ENCODE measurements at regions of chr18 and their contacts with region 1.

Region 1: GRCh38 chr18:2655178-2655953 is at the start of gene SMCHD1:
- DNase-seq: peak; percentile 86
- H3K4me3 Mint-ChIP-seq: peak within 1 kb of the TSS; percentile 98
- H3K27ac Mint-ChIP-seq: peak within 1 kb of the TSS; percentile 95
- H3K4me1 Mint-ChIP-seq: peaks cover 33% of the 10 kb centered on the region
- H3K27me3 Mint-ChIP-seq: peaks cover 5% of the 10 kb centered on the region
- total RNA-seq, gene SMCHD1: 100 and 101 TPM in 2 replicates

Region 2: DNA sequence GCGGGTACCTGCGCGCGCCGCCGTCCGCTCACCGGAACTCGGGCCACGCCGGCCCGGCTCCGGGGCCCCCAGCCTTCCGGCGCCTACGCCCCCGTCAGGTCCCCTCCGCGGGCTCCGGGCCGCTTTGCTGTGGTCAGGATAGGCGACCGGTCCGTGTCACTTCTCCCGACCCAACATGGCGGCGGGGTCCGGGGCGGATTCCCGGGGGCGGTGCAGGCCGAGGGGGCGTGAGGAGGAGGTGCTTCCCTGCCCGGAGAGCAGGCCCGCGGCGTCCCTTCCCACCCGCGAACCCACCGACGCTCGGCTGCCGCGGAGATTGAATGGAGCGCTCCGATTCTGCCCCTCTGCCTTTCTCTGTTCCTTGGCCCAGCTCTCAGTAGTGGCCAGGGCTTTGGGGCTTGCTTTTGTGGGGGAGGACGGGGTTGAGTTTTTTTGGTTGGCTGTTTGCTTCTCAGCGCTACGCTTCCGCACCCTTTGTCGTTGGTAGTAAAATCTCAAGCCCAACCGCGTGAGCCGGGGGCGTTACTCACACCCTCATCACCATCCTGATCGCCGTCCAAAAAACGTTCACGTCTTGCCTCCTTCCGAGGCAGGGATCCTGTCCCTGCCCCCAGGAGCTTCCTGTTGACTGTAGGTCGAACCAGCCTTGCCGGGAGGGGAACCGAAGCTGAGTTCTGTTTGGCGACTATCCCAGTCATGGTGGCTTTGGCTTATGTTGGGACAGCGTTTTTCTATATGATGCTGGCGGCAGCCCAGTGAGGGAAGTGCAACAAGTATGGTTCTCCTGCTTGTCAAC is 1842.8 kb before region 1 on chr18:
- intact Hi-C with region 1: loop called (anchors 10 kb)
- DNase-seq: peak; percentile 78
- H3K4me3 Mint-ChIP-seq: peak overlapping the region; percentile 89
- H3K27ac Mint-ChIP-seq: peak overlapping the region; percentile 98
- H3K4me1 Mint-ChIP-seq: peaks cover 69% of the 10 kb centered on the region
- H3K27me3 Mint-ChIP-seq: no peaks in the 10 kb centered on the region

Region 3: GRCh38 chr18:2589345-2590068 is 65.9 kb before region 1 on chr18:
- intact Hi-C with region 1: loop called (anchors 5 kb)
- DNase-seq: no peak
- H3K4me3 Mint-ChIP-seq: peak overlapping the region; percentile 58
- H3K27ac Mint-ChIP-seq: peak overlapping the region; percentile 84
- H3K4me1 Mint-ChIP-seq: peaks cover 43% of the 10 kb centered on the region
- H3K27me3 Mint-ChIP-seq: no peaks in the 10 kb centered on the region

Region 4: DNA sequence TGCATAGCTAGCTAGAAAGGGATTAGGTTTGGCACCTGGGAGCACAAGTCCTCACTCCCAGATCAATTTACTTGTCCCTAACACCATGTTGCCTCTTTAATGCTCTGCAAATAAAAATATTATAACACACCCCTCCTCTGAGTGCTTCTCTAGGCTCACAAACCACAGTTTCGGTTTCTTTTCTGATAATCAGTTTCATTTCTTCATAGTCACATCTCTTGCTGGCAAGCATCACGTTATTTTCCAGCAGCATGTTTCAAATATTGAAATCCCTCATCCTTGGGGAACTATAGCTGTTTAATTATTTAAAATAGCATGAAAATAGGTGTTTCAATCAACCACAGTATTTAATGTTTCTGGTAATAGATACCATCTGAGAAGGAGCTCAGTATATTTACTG is 13.7 kb before region 1 on chr18:
- intact Hi-C with region 1: loop called (anchors 1 kb)
- DNase-seq: no peak
- H3K4me3 Mint-ChIP-seq: peak overlapping the region; percentile 50
- H3K27ac Mint-ChIP-seq: peak overlapping the region; percentile 64
- H3K4me1 Mint-ChIP-seq: peaks cover 43% of the 10 kb centered on the region
- H3K27me3 Mint-ChIP-seq: no peaks in the 10 kb centered on the region

Region 5: GRCh38 chr18:2958819-2959298 is 303.5 kb after region 1 on chr18:
- intact Hi-C with region 1: loop called (anchors 5 kb)
- DNase-seq: no peak
- H3K4me3 Mint-ChIP-seq: peak overlapping the region; percentile 40
- H3K27ac Mint-ChIP-seq: peak overlapping the region; percentile 99
- H3K4me1 Mint-ChIP-seq: peaks cover 84% of the 10 kb centered on the region
- H3K27me3 Mint-ChIP-seq: no peaks in the 10 kb centered on the region